ENCODE measurements at regions of chr5 and their contacts with region 1.

Region 1: DNA sequence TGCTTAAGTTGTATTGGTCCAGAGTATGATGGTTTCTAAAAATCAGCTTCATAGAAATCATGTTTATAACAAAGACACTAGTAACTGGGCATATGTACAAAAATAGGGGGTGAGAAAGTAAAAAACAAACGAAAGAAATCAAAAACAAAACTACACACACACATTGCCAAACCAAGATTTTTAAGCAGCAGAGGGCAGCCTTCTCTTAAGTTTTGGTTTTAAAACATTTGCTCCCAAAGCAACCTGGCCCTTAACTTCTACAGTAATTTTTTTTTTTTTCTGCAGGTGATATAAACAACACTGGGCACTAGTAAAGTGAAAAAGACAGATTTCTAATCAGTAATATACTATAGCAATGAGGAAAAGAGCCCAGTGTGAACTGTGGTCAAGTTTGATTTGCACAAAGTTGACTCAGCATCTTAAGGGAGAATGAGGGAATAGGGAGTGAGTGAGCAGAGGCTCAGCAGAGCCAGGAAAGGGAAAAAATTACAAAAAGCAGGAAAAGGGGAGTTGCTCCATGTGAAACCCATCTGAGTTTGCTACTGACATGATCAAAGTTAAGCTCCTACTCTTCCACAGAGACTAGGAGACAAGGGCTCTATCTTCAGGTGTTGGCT is 13.4 kb upstream of the GAPT start:
- DNase-seq: no peak
- H3K4me3 ChIP-seq: no peak overlapping the region
- H3K27ac ChIP-seq: no peak overlapping the region
- H3K4me1 ChIP-seq: no peaks in the 10 kb centered on the region
- H3K27me3 ChIP-seq: no peaks in the 10 kb centered on the region
- CTCF ChIP-seq: peak; percentile 43; the same call in 1 of the 2 replicates

Region 2: DNA sequence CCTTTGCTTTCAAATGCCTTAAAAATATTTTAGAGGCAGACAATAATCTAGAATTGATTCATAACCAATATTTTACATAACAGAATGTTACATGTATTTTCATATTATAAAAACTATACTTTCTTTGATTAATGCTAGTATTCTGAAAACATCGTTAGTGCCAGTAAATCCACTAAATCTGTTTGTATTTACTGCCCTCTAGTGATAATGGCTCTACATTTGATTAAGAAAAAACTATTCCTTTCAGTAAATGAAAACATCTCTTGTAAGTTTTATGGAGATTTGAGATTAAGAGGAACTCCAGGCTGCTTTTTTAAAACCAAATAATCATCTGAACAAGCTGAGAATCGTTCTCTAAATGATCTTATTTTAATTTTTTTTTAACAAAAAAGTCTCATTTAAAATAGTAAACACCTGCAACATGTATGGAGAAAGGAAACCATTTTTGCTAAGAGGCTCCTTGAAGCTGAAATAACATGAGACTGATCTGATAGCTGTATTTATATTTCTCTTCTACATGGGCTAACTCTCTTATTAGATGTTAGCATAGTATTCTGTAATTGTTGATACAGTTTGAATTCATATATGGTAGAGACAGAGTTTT is 529.7 kb after region 1 on chr5:
- CTCF ChIA-PET with region 1: no interaction called
- POLR2A ChIA-PET with region 1: no interaction called
- intact Hi-C with region 1: loop called (anchors 10 kb)
- DNase-seq: peak; percentile 56
- H3K4me3 ChIP-seq: no peak overlapping the region
- H3K27ac ChIP-seq: no peak overlapping the region
- H3K4me1 ChIP-seq: no peaks in the 10 kb centered on the region
- H3K27me3 ChIP-seq: no peaks in the 10 kb centered on the region
- CTCF ChIP-seq: peak; percentile 73

Measured in A673 (cell line).